ENCODE measurements at regions of chr3 and their contacts with region 1.

Region 1: GRCh38 chr3:15268033-15268631 is 62.1 kb downstream of the CAPN7 start:
- DNase-seq: peak; percentile 92
- ATAC-seq: peak; percentile 73 to 80

Region 2: DNA sequence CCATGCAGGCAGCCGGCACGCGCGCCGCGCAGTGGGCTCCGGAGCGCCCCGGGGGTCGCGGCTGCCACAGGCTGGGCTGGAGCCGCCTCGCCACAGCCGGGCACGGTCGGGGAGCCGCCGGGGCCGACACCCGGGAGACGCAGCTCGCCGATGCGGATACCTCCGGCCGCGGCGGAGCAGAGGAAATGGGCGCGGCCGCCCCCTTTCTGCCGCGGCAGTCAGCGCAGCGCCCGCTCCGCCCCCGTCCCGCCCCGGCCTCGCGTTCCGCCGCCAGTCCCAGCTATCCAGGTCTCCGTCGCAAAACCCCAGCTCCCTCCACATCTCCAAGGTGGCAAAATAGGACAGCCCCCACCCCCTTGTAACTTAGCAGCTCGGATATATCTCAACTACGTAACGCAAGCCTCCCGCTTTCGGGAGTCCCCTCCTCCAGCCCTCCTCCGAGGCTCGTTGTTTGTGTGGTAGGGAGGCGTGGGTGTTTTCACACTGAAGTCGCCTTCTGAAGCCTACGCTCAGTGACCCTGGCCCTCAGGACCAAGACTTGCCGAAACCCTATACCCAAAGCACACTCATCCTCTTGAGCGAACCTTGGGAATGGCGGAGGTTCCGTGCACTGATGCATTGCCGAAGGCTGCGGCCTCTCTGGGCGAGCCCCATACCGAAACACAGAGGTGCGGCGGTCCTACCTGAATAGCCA is 64.4 kb after region 1 on chr3 and contains the start of gene SH3BP5:
- intact Hi-C with region 1: loop called (anchors 5 kb)
- DNase-seq: peak; percentile 85
- ATAC-seq: peak; percentile 91 to 94
- total RNA-seq, gene SH3BP5: 21.7 to 24.8 TPM

Region 3: DNA sequence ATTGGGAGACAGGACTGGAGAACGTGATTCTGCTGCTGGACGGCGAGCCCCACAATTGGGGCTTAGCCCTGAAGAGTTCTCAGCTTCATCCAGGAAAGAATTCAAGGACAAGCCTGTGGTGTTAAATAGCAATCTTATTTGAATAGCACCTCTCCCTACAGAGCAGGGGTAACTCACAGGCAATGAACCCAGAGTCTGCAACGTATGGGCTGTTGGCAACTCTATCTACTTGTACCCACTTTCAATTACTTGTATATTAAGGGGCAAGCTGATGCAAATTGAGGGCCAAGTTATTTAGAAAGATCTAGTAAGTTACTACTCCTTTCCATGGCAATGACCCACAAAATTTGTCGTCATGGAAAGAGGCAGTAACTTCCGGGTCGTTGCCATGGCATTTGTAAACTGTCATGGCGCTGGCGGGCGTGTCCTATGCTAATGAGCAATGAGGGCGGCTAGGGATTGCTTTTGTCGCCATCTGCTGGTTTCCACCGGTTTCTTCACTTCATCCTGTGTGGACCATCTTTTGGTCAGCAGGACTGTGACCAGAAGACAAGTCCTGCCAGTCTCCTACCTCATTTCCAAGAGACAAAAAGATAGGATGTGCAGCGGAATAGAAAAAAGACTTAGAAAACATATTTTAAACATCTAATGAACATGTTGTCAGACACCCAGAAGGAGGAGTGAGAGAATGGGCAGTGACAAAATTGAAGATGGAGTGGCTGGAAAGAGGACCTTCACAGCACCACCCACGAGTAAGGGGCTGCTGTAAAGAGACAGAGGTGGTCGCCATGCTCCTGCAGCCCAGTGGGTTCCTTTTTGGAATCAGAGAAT is 110.0 kb after region 1 on chr3:
- intact Hi-C with region 1: loop called (anchors 1 to 5 kb)
- DNase-seq: peak; percentile 95
- ATAC-seq: peak; percentile 97 to 98

Region 4: GRCh38 chr3:15405448-15406050 is 137.4 kb after region 1 on chr3:
- intact Hi-C with region 1: loop called in 1 of 2 experiments (anchors 1 kb)
- DNase-seq: no peak
- ATAC-seq: peak; percentile 63 to 81

Region 5: DNA sequence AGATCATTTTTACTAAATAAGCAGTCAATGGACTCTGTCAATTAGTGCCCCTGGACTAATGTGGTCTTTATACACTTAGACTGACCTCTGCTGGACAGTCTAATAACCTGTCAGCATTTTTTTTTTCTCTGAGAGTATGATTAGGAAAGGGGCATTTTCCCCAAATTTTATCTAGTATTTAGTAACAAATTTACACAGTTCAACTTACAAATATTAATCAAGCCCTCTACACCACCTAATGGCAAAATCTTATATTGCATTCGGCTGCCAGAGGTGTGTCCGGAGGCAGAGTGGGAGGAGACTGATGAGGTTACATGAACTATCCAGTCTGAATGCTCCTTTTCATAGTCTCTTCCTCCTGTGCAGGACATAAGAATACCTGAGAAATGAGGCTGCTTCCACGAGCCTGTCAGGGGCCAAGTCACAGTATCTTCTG is 289.4 kb after region 1 on chr3:
- intact Hi-C with region 1: loop called in 1 of 2 experiments (anchors 10 kb)
- DNase-seq: no peak
- ATAC-seq: peak; percentile 80 to 89